AG04450 (cell line): ENCODE measurements at regions of chr12 and their contacts with region 1.

Region 1: GRCh38 chr12:124399622-124400021 is 104.7 kb downstream of the RFLNA start:
- DNase-seq: no peak
- H3K4me3 ChIP-seq: no peak overlapping the region
- H3K27ac ChIP-seq: no peak overlapping the region
- H3K27me3 ChIP-seq: no peaks in the 10 kb centered on the region
- CTCF ChIP-seq: peak; percentile 73

Region 2: GRCh38 chr12:124388679-124389536 is 10.7 kb before region 1 on chr12:
- CTCF ChIA-PET with region 1: interaction called, 12 read pairs
- POLR2A ChIA-PET with region 1: interaction called, 6 read pairs
- DNase-seq: peak; percentile 63
- H3K4me3 ChIP-seq: peak overlapping the region; percentile 85
- H3K27ac ChIP-seq: peak overlapping the region; percentile 82
- H3K27me3 ChIP-seq: no peaks in the 10 kb centered on the region
- CTCF ChIP-seq: no peak

Region 3: DNA sequence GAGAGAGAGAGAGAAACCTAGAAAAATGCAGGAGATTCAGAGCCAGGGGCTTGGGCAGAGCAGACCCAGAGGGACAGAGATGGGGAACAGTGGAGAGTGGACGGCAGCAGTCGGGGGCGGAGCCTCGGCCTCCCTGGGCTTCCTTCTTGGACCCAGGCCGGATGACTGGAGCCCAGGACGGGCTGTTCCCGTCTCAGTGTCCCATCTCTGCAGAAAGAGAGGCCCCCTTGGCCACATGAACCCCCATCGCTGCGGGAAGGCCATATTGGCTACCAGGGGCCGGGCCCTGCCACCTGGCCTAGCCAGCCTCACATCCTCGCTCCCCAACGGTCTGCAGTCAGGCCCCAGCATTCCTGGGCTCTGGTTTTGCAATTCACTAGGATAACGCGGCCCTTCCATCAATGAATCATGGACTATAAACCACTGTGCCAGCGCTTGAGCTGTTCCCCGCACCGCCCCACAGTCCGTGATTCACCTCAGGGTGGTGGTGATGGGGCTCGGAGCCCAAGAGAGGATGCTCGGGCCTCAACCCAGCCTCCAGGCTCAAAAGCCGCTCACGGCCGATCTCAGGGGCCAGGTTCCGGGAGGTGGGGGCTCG is 11.8 kb after region 1 on chr12:
- CTCF ChIA-PET with region 1: interaction called, 17 read pairs
- POLR2A ChIA-PET with region 1: interaction called, 3 read pairs
- DNase-seq: peak; percentile 89
- H3K4me3 ChIP-seq: 0 out of 2 replicates have a peak overlapping the region, but pooled peaks have one; percentile 3
- H3K27ac ChIP-seq: peak overlapping the region; percentile 93
- H3K27me3 ChIP-seq: no peaks in the 10 kb centered on the region
- CTCF ChIP-seq: no peak

Region 4: GRCh38 chr12:124419292-124420040 is 19.8 kb after region 1 on chr12:
- CTCF ChIA-PET with region 1: interaction called, 10 read pairs
- POLR2A ChIA-PET with region 1: interaction called, 3 read pairs
- DNase-seq: peak; percentile 81
- H3K4me3 ChIP-seq: no peak overlapping the region
- H3K27ac ChIP-seq: peak overlapping the region; percentile 95
- H3K27me3 ChIP-seq: no peaks in the 10 kb centered on the region
- CTCF ChIP-seq: no peak